Activated T-helper 2 cell treated with anti-CD3 and anti-CD28 coated beads, Interferon-gamma antibody, Interleukin-2, Interleukin-4, amounts not matched to agents 10 μg/mL and 5 μg/mL and 100 μg/mL, durations not matched to agents 14 hours and 24 hours and 36 hours (primary cell): ENCODE measurements at regions of chr20 and their contacts with region 1.

Region 1: DNA sequence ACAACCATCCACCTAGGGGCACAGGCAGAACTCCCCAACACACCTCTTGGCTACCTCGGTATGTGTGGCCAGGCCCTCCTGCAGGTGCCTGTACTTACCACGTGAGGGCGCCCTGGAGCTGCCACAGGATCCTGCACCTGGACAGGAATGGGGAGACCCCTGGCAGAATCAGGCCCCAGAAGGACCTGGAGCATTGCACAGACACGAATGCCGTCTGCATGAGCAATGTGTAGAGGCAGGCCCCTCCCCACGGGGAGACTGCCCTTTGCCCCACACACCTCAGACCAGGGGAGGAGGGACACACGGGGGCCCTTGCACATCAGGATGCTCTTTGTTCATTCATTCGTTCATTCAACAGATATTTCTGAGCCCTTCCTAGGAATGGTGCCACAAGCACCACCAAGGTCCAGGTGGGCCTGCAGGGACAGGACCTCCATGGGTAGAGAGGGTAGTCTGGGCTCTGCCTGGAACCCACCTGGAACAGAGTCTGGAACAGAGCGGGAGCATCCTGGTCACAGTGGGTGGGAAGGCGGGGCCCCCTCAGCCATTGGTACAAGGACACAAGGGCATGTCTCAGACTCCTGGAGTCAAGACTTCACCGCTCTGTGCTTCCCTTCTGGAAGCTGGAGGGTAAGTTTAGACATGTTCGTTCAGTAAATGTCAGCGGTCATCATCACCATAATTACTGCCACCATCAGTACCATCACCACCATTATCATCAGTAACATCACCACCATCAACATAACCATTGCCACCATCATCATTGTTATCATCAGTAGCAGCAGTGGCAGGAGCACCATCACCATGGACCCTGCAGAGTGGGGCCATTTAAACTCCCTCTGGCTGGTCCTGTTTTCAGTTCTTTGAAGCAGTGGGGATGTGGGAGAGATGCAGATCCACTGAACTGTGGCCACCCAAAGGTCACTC is 32.2 kb downstream of the YTHDF1 start:
- DNase-seq: peak; percentile 25
- H3K4me3 Mint-ChIP-seq: no peak overlapping the region
- H3K27ac Mint-ChIP-seq: no peak overlapping the region
- H3K4me1 Mint-ChIP-seq: no peaks in the 10 kb centered on the region
- H3K27me3 Mint-ChIP-seq: peaks cover 16% of the 10 kb centered on the region

Region 2: DNA sequence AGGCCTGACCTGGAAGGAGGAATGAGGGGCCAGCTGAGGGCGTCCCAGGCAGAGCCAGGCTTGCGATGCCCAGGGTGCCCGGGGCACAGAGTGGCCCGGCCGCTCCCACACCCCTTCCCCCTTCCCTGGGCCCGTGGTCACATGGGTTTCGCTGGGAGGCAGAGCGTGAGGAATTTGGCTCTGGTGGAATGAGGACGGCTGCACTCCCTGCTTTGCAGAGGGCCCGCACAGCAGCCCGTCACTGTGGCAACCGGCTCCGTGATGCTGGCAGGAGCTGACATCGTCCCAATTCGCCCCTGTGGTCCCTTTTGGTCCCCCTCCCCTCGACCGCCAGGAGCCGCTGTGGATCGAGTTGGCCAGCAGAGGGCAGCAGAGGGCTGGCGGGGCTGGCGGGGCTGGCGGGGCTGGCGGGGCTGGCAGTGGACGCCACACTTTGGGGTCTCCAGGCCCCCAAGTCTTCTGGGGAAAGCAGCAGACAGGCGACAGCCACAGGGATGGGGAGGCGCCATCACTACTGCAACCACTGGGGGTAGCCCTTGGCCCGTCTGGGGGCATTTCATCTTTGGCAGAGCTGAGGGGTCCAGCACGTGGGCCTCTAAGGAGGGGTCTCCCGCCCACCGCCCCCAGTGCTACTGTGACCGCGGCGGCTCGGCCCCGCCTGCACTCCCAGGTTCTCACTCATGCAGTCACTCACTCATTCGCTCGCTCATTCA is 127.3 kb before region 1 on chr20:
- intact Hi-C with region 1: loop called (anchors 5 kb)
- DNase-seq: peak; percentile 19
- H3K4me3 Mint-ChIP-seq: no peak overlapping the region
- H3K27ac Mint-ChIP-seq: no peak overlapping the region
- H3K4me1 Mint-ChIP-seq: no peaks in the 10 kb centered on the region
- H3K27me3 Mint-ChIP-seq: peaks cover 2% of the 10 kb centered on the region